Head of caudate nucleus (tissue), 42 donors: ENCODE measurements at regions of chrX and their contacts with region 1.

Region 1: DNA sequence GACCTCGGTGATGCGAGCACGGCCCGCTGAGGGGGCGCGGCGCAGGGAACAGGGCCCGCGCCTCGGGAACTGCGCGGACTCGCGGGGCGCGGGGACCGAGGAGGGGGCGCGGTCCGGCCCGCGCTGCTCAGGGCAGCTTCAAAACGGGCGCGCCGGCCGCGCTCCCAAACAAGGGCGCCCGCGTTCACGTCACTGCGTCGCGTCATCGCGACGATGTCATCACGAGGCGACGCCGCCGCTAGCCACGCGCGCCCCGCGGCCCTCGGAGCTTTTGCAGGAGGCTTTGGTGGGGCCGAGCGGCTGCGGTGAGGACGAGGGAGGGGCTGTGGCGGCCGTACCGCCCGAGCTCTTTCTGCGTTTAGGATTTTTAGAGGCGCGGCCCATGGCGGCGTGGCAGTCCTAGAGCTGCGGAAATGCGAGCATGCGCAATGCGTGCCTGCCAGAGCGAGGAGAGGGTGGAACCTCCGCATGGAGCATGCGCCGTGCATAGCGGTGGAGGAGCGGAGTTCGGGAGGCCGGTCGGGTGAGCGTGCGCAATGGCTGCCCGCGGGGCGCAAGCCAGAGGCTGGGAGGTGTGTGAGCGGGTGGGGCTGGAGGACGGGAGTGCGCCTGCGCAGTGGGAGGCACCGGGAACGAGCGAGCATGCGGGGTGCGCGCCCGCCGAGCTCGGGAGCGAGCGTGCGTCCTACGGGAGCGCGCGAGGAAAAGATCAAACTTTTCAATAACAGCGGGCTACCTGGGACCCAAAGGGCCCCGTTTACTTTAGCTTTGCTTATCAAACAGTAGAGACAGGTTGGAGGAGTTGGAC is at the start of gene PPP2R3B:
- DNase-seq: peak; percentile 91 to 100 (median 98)

Region 2: DNA sequence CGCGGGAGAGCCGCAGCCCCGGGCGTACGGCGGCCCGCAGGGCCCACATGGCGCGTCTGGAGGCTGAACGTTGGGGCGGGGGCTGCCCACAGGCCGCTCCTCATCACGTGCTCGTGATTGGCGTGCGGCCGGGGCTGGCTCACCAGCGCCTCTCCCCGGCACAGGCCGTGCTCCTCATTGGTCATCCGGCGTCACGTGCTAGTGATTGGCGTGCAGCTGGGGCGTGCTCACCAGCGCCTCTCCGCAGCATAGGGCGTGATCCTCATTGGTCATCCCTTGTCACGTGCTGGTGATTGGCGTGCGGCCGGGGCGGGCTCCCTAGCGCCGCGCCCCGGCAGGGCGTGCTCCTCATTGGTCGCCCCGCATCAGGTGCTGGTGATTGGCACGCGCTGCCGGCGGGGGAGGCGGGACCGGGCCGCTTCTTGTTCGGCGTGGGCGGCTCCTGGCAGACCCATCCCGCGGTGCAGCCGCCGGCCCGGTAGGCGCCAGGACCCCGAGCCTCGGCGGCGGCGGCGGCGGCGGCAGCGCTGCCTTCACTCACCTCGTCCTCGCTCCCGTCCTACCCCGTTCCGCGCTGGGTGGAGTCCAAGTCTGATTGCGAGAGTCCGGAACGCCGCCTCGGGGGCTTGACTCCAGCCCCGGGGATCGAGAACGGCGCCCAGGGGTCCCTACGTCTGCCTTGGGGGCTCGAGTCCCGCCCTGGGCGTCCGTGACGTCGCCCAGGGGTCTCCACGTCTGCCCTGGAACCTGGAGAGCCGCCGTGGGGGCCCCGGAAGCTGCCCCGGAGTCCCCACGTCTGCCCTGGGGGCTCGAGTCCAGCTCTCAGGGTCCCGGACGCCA is 68.0 kb before region 1 on chrX and contains the start of gene GTPBP6:
- intact Hi-C with region 1: loop called (anchors 5 kb)
- DNase-seq: peak; percentile 98 to 100 (median 100)